ENCODE measurements at regions of chr5 and their contacts with region 1.

Region 1: GRCh38 chr5:52787600-52788504 is at the starts of genes ITGA1 and PELO:
- DNase-seq: peak; percentile 62 to 95
- H3K4me3 ChIP-seq: peak within 1 kb of the TSS; percentile 35
- CTCF ChIP-seq: no peak
- POLR2A ChIP-seq: no peak
- total RNA-seq, gene ITGA1: 2.4 to 10.7 (median 5.4) TPM
- total RNA-seq, gene PELO: 13.3 to 16.5 (median 13.9) TPM

Region 2: GRCh38 chr5:52856564-52856963 is 68.7 kb after region 1 on chr5:
- intact Hi-C with region 1: no loop called
- DNase-seq: no peak
- H3K4me3 ChIP-seq: no peak overlapping the region
- CTCF ChIP-seq: no peak
- POLR2A ChIP-seq: no peak

Region 3: GRCh38 chr5:52915176-52915875 is 127.5 kb after region 1 on chr5:
- intact Hi-C with region 1: loop called (anchors 2 kb)
- DNase-seq: peak in 1 of 2 donors; percentile 37
- H3K4me3 ChIP-seq: no peak overlapping the region
- CTCF ChIP-seq: peak in 1 of 3 donors; percentile 49
- POLR2A ChIP-seq: no peak

Measured in lower leg skin (tissue), 4 donors.